Calu3 (cell line): ENCODE measurements at regions of chr18 and their contacts with region 1.

Region 1: GRCh38 chr18:57748770-57749603 is 54.1 kb downstream of the ATP8B1 start:
- DNase-seq: peak; percentile 46
- H3K4me3 Mint-ChIP-seq: peak overlapping the region; percentile 14
- H3K27ac Mint-ChIP-seq: peak overlapping the region; percentile 45
- H3K4me1 Mint-ChIP-seq: peaks cover 30% of the 10 kb centered on the region
- H3K27me3 Mint-ChIP-seq: no peaks in the 10 kb centered on the region
- CTCF ChIP-seq: no peak

Region 2: DNA sequence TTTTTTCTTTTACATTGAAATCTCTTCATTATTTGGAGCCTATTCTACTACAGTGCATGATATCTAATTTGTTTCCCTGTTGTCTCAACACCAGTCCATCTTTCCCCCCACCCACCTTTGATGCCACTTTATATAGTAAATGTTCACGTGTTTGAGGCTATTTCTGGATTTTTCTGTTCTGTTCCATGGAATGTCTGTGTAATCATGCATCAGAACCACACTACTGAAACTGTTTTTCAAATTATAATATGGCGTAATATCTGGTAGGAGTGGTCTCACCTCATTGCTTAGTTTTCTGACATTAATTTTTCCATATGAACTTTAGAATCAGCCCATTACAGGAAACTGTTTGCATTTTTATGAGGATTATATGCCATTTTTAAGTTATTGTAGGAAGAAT is 108.2 kb before region 1 on chr18:
- CTCF ChIA-PET with region 1: no interaction called
- intact Hi-C with region 1: no loop called
- DNase-seq: no peak
- H3K4me3 Mint-ChIP-seq: no peak overlapping the region
- H3K27ac Mint-ChIP-seq: no peak overlapping the region
- H3K4me1 Mint-ChIP-seq: no peaks in the 10 kb centered on the region
- H3K27me3 Mint-ChIP-seq: no peaks in the 10 kb centered on the region
- CTCF ChIP-seq: no peak

Region 3: GRCh38 chr18:57737400-57738060 is 11.5 kb before region 1 on chr18:
- CTCF ChIA-PET with region 1: interaction called, 11 read pairs
- intact Hi-C with region 1: no loop called
- DNase-seq: peak; percentile 74
- H3K4me3 Mint-ChIP-seq: peak overlapping the region; percentile 60
- H3K27ac Mint-ChIP-seq: peak overlapping the region; percentile 87
- H3K4me1 Mint-ChIP-seq: peaks cover 26% of the 10 kb centered on the region
- H3K27me3 Mint-ChIP-seq: no peaks in the 10 kb centered on the region
- CTCF ChIP-seq: no peak

Region 4: DNA sequence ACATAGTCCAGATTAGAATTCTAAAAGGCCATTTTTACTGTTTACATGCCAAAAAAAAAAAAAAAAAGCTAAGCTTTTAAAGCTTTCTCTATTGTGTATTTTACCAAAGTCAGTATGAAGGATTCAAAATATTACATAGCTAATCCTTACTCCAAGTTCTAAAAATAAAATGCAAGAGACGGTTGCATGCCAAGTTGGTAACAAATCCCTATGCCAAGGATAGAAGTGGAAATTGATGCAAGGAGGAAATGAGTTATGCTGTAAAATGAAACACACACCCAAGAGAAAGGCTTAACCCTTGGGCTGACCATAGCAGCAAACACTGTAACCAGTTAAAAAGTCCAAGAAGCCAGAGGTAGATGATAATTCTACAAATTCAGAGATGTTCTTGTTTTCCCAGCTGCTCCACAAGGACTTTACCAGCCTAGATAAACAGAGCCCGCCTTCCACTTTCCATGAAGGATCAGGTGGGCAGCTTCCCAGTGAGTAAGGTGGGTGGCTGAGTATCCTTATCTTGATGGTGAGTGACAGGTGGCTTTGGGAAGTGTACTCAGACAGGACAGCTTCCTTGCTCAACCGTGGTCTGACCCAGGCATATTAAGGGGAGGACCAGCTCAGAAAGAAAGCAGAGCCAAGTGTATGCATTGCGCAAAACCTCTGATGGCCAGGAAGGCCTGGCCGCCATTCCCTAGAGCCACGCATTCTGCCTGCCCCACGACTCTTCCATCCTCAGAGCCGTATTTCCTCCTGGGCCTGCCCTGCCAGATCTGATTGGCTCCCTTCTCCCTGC is 19.7 kb after region 1 on chr18:
- CTCF ChIA-PET with region 1: interaction called, 16 read pairs
- intact Hi-C with region 1: no loop called
- DNase-seq: no peak
- H3K4me3 Mint-ChIP-seq: no peak overlapping the region
- H3K27ac Mint-ChIP-seq: no peak overlapping the region
- H3K4me1 Mint-ChIP-seq: peaks cover 56% of the 10 kb centered on the region
- H3K27me3 Mint-ChIP-seq: no peaks in the 10 kb centered on the region
- CTCF ChIP-seq: no peak

Region 5: DNA sequence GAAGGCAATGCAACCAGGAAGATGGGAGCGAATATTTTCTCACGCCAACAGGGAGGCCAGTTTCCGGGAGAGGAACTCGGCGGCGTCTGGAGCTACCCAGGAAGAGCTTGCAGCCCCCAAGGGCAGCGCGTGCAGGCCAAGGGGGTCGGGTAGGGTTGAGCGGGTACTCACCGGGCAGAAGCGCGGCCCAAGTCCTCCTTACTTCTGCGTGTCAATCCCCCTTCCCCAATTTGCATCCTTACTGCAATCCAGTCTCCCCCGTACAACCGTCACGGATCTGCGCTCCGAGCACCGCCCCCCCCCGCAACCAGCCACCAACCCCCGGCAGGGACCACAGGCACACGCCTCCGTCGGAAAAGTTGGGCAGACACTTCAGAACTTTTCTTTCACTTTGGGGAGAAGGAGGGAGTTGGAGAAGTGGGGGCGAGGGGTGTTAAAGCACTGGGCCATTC is 52.8 kb after region 1 on chr18:
- CTCF ChIA-PET with region 1: no interaction called
- intact Hi-C with region 1: loop called (anchors 2 kb)
- DNase-seq: peak; percentile 56
- H3K4me3 Mint-ChIP-seq: peak overlapping the region; percentile 96
- H3K27ac Mint-ChIP-seq: peak overlapping the region; percentile 84
- H3K4me1 Mint-ChIP-seq: peaks cover 40% of the 10 kb centered on the region
- H3K27me3 Mint-ChIP-seq: no peaks in the 10 kb centered on the region
- CTCF ChIP-seq: no peak